ENCODE measurements at regions of chr16 and their contacts with region 1.

Region 1: GRCh38 chr16:19086322-19087199 is 19.1 kb downstream of the COQ7 start:
- DNase-seq: peak; percentile 74 to 89 (median 84)
- H3K4me3 ChIP-seq: peak overlapping the region in 2 of 4 donors; percentile 10 to 55
- H3K27ac ChIP-seq: peak overlapping the region in 1 of 5 donors; percentile 18
- H3K4me1 ChIP-seq: peaks cover 9 to 14% of the 10 kb centered on the region in 2 donors
- H3K27me3 ChIP-seq: no peaks in the 10 kb centered on the region
- CTCF ChIP-seq: peak; percentile 89 to 99 (median 98)
- POLR2A ChIP-seq: peak in 1 of 2 donors; percentile 11

Region 2: DNA sequence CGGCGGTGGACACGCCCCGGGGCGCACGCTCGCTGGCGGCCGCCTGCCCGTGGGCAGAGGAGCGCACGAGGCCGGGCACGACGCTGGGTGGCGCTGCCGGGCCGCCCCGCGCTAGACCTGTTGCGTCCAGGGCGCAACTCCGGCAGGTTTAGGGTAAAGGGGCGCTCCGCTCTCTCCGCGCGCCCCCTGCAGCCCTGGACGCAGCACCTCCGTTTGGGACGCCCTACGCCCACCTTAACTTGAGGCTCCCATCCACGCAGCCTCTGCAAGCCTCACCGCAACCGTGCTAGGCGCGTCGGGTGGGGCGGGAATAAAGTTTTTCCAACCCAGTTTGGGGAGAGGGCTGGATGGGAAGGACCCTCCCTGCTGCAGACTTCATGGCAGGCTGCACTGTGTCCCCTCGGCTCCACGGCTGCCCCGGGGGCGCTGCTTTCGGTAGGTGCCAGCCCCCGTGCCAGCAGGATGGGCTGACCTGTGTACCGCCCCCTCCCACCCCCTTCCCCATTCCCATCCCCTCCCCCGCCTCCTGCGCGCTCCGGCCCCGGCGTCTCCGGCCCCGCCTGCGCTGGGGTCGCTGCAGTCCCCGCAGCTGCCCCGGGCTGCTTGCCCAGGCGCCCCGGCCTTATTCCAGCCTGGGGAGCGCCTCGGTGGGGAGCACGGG is 81.3 kb after region 1 on chr16 and contains the start of gene SYT17:
- intact Hi-C with region 1: loop called in 1 of 2 experiments (anchors 5 kb)
- DNase-seq: peak; percentile 56 to 77 (median 65)
- H3K4me3 ChIP-seq: peak within 1 kb of the TSS in 2 of 4 donors; percentile 26 to 57
- H3K27ac ChIP-seq: peak within 1 kb of the TSS in 1 of 5 donors; percentile 66
- H3K4me1 ChIP-seq: peaks cover 0 to 17% of the 10 kb centered on the region in 2 donors
- H3K27me3 ChIP-seq: peaks cover 9% of the 10 kb centered on the region
- CTCF ChIP-seq: peak; percentile 11 to 84 (median 60)
- POLR2A ChIP-seq: no peak
- total RNA-seq, gene SYT17: 1.1 to 6.5 (median 2.5) TPM

Region 3: DNA sequence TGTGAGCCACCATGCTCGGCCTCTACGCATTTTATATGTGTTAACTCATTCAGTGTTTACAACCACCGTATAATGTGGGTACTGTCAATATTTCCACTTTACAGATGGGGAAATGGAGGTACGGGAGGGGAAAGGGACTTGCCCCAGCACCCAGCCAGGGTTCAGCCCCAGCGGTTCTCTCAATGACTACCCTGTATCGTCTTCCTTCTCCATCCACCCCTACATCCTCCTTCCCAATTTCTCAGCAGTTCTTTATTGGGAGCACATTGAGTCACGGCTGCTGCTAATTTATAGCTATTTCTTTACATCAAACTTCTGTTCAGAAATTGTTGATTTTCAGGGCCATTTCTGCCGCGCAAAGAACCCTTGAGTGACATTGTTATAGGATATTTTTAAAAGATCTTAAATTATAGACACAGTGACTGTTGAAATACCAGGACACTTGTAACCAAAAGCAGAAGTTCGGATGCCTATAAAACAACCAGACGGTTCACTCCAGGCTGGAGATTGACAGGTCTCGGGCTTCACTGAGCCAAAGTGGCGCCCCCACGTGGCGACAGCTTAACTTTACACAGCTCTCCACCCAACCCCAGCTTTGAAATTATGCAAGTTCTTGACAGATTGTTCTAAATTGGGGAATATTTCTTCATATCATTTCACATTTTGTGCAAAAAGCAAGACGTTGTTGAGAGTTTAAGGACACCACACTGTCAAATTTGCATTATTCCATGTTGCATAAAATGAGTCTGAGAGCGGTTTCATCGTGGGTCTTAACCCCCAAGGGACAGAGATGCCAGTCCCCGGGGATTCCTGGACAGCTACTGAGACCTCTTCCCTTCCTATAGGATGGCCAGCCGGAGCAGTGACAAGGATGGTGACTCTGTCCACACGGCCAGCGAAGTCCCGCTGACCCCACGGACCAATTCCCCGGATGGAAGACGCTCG is 93.3 kb after region 1 on chr16:
- intact Hi-C with region 1: loop called (anchors 2 to 5 kb)
- DNase-seq: peak; percentile 33 to 80 (median 53)
- H3K4me3 ChIP-seq: no peak overlapping the region
- H3K27ac ChIP-seq: no peak overlapping the region
- H3K4me1 ChIP-seq: no peaks in the 10 kb centered on the region
- H3K27me3 ChIP-seq: no peaks in the 10 kb centered on the region
- CTCF ChIP-seq: peak; percentile 36 to 65 (median 62)
- POLR2A ChIP-seq: no peak

Region 4: DNA sequence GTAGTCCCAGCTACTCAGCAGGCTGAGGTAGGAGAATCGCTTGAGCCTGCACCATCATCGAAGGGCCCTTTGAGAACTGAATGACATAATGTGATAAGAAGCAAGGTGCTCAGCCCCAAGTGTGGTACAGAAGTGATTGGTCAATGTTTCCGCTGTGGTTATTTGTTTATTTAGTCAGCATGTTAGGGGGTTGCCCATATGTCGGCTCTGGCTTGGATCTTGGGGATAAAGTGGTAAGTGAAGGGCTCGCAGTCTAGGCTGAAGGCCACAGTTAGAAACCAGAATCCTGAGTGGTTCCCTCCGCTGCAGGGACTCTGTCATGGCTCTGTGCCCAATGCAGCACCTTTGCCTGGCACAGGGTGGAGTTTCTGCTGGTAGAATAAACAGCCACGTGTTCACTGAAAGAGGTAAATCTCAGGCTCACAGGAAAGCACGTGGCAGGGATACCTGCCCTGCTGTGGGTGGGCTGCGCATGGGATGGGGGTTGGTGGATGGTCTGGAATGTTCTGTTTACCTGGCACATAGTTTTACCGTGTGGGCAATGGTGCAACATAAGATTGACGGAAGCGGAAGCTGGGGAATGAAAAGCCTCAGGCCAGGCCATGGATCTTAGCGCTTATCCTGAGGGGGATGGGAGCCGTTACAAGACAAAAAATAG is 116.9 kb after region 1 on chr16:
- intact Hi-C with region 1: no loop called
- DNase-seq: no peak
- H3K4me3 ChIP-seq: no peak overlapping the region
- H3K27ac ChIP-seq: no peak overlapping the region
- H3K4me1 ChIP-seq: no peaks in the 10 kb centered on the region
- H3K27me3 ChIP-seq: no peaks in the 10 kb centered on the region
- CTCF ChIP-seq: no peak
- POLR2A ChIP-seq: no peak

Region 5: GRCh38 chr16:19375561-19376158 is 289.1 kb after region 1 on chr16:
- intact Hi-C with region 1: loop called (anchors 2 to 5 kb)
- DNase-seq: peak; percentile 19 to 75 (median 35)
- H3K4me3 ChIP-seq: no peak overlapping the region
- H3K27ac ChIP-seq: no peak overlapping the region
- H3K4me1 ChIP-seq: no peaks in the 10 kb centered on the region
- H3K27me3 ChIP-seq: no peaks in the 10 kb centered on the region
- CTCF ChIP-seq: peak; percentile 90 to 98 (median 94)
- POLR2A ChIP-seq: no peak

Region 6: DNA sequence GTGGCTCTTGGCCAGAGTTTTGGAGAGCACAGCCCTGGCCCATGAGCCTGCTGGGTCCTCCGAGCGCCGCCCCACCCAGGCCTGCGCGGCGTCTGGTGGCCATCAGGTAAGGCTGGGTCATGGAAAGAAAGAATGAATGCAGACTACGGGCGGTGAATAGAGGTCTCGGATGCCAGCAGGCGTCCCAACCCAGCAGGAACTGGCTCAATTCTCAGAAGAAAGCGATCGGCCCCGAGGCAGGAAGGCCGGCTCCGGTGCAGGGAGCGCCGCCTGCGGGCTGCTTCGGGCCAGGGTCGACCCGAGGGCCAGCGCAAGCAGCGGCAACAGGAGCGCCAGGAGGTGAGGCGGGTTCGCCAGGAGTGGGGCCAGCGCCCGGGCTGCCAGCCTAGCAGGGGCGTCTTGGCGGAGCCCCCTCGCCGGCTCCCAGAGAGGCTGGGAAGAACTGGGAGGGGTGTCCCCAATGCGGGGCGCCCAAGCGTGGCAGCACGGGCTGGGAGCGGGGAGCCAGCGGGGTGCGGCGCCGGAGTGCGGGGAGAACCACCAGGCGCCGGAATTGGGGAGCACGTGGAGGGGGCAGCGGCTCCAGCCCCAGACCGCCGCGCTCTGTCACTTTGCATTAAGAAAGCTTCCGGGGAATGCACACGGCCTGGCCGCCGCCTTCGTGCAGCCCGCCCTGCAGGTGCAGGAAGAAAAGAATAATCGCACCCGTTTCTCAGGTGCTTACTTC is 324.0 kb after region 1 on chr16:
- intact Hi-C with region 1: no loop called
- DNase-seq: peak in 2 of 7 donors; percentile 13 to 21
- H3K4me3 ChIP-seq: peak overlapping the region in 1 of 4 donors; percentile 37
- H3K27ac ChIP-seq: no peak overlapping the region
- H3K4me1 ChIP-seq: peaks cover 0 to 5% of the 10 kb centered on the region in 2 donors
- H3K27me3 ChIP-seq: peaks cover 41% of the 10 kb centered on the region
- CTCF ChIP-seq: peak in 1 of 6 experiments; percentile 16
- POLR2A ChIP-seq: no peak

Region 7: GRCh38 chr16:19502395-19503131 is 416.0 kb after region 1 on chr16:
- intact Hi-C with region 1: loop called (anchors 10 kb)
- DNase-seq: peak; percentile 72 to 89 (median 80)
- H3K4me3 ChIP-seq: no peak overlapping the region
- H3K27ac ChIP-seq: no peak overlapping the region
- H3K4me1 ChIP-seq: peaks cover 0 to 4% of the 10 kb centered on the region in 2 donors
- H3K27me3 ChIP-seq: no peaks in the 10 kb centered on the region
- CTCF ChIP-seq: peak; percentile 58 to 82 (median 70)
- POLR2A ChIP-seq: no peak

Measured in adrenal gland (tissue), 19 donors.